Colonic mucosa (tissue), 4 donors: ENCODE measurements at regions of chr22 and their contacts with region 1.

Region 1: DNA sequence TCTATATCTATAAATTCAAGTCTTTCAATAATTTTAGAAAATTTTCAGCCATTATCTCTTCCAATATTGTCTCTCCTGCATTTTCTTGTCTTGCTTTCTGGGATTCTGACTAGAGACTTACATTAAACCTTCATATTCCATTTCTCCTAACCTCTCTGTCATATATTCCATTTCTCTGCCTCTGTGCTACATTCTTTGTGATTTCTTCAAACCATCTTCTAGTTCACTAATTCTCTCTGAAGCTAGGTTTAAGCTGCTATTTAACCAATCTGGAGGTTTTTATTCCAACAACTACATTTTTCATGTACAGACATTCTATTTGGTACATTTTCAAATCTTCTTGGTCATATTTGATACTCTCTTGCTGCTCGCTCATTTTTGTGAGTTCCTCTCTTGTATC is 122.5 kb downstream of the TTC28 start:
- DNase-seq: no peak
- H3K4me3 ChIP-seq: no peak overlapping the region
- H3K27ac ChIP-seq: no peak overlapping the region
- H3K4me1 ChIP-seq: no peaks in the 10 kb centered on the region
- H3K27me3 ChIP-seq: no peaks in the 10 kb centered on the region
- CTCF ChIP-seq: no peak

Region 2: GRCh38 chr22:28435140-28435768 is 121.9 kb before region 1 on chr22:
- intact Hi-C with region 1: no loop called
- DNase-seq: peak; percentile 28
- H3K4me3 ChIP-seq: no peak overlapping the region
- H3K27ac ChIP-seq: no peak overlapping the region
- H3K4me1 ChIP-seq: no peaks in the 10 kb centered on the region
- H3K27me3 ChIP-seq: no peaks in the 10 kb centered on the region
- CTCF ChIP-seq: no peak

Region 3: DNA sequence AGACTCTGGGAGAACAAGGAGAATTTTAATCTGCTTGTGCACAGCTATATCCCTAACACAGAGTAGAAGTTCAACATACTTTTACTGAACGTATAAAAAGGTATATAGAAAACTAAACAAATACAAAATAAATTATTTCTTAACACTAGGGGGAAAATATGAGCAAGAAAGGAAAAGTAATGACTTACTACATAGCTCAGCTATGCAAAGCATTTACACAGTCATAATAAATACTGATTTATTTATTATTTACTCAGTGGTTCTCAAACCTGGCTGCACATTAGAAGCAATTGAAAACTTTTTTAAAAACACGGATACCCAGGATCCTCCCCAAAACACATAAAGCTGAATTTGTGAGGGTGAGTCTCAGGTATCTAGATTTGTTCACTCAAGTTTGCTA is 60.0 kb before region 1 on chr22:
- intact Hi-C with region 1: loop called (anchors 10 kb)
- DNase-seq: no peak
- H3K4me3 ChIP-seq: no peak overlapping the region
- H3K27ac ChIP-seq: no peak overlapping the region
- H3K4me1 ChIP-seq: no peaks in the 10 kb centered on the region
- H3K27me3 ChIP-seq: no peaks in the 10 kb centered on the region
- CTCF ChIP-seq: no peak